ENCODE measurements at regions of chrX and their contacts with region 1.

Region 1: GRCh38 chrX:120250522-120251271 is at the start of gene ZBTB33:
- DNase-seq: peak; percentile 60
- ATAC-seq: peak; percentile 99
- H3K4me3 ChIP-seq: peak within 1 kb of the TSS; percentile 69
- H3K27ac ChIP-seq: peak within 1 kb of the TSS; percentile 68
- H3K4me1 ChIP-seq: no peaks in the 10 kb centered on the region
- H3K27me3 ChIP-seq: no peaks in the 10 kb centered on the region
- CTCF ChIP-seq: peak; percentile 53 to 63 (median 55); a peak in 5 of 6 replicates
- EP300 ChIP-seq: no peak
- POLR2A ChIP-seq: peak; percentile 75
- RAD21 ChIP-seq: peak; percentile 19; the same call in 1 of the 2 replicates
- polyA plus RNA-seq, gene ZBTB33: 5.2 to 5.4 TPM

Region 2: GRCh38 chrX:120262859-120263708 is 12.4 kb after region 1 on chrX:
- CTCF ChIA-PET with region 1: interaction called, 5 read pairs
- POLR2A ChIA-PET with region 1: interaction called, 4 read pairs
- RAD21 ChIA-PET with region 1: interaction called, 4 read pairs
- SMC1A ChIA-PET with region 1: interaction called, 13 read pairs
- in situ Hi-C with region 1: no loop called
- intact Hi-C with region 1: no loop called
- DNase-seq: no peak
- ATAC-seq: peak; percentile 85
- H3K4me3 ChIP-seq: no peak overlapping the region
- H3K27ac ChIP-seq: peak overlapping the region; percentile 32; the same call in 1 of the 2 replicates
- H3K4me1 ChIP-seq: peaks cover 8% of the 10 kb centered on the region
- H3K27me3 ChIP-seq: no peaks in the 10 kb centered on the region
- CTCF ChIP-seq: no peak
- EP300 ChIP-seq: peak; percentile 22 to 35; a peak in 1 of 4 replicates
- POLR2A ChIP-seq: no peak
- RAD21 ChIP-seq: no peak

Region 3: DNA sequence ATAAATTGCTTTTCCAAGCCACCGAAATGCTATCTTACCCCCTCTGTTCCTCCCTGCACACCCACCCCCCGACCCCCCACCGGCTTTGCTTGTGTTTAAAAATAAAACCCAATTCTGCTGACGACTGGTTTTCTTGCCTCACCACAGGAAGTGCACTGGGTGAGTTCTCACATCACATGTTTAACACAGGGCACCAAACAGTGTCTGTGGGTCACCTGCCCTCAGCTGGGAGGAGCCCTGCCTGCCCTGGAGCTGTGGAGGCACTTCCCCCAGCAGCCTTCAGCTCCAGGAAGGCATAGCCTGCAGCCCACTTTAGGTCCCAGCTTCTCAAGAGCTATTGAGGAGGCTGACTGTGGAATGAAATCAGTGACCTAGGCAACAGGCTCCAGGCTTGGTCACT is 51.7 kb after region 1 on chrX:
- CTCF ChIA-PET with region 1: interaction called, 6 read pairs
- POLR2A ChIA-PET with region 1: interaction called, 13 read pairs
- RAD21 ChIA-PET with region 1: interaction called, 29 read pairs
- SMC1A ChIA-PET with region 1: interaction called, 16 read pairs
- in situ Hi-C with region 1: loop called (anchors 5 kb)
- intact Hi-C with region 1: loop called (anchors 1 kb)
- DNase-seq: peak; percentile 61
- ATAC-seq: peak; percentile 96
- H3K4me3 ChIP-seq: peak overlapping the region; percentile 30; the same call in 1 of the 2 replicates
- H3K27ac ChIP-seq: peak overlapping the region; percentile 62
- H3K4me1 ChIP-seq: peaks cover 13% of the 10 kb centered on the region
- H3K27me3 ChIP-seq: no peaks in the 10 kb centered on the region
- CTCF ChIP-seq: no peak
- EP300 ChIP-seq: 0 out of 4 replicates have a peak, but pooled peaks of 1 of the 2 experiments have one; percentile 29
- POLR2A ChIP-seq: 0 out of 2 replicates have a peak, but pooled peaks have one; percentile 32
- RAD21 ChIP-seq: no peak

Region 4: DNA sequence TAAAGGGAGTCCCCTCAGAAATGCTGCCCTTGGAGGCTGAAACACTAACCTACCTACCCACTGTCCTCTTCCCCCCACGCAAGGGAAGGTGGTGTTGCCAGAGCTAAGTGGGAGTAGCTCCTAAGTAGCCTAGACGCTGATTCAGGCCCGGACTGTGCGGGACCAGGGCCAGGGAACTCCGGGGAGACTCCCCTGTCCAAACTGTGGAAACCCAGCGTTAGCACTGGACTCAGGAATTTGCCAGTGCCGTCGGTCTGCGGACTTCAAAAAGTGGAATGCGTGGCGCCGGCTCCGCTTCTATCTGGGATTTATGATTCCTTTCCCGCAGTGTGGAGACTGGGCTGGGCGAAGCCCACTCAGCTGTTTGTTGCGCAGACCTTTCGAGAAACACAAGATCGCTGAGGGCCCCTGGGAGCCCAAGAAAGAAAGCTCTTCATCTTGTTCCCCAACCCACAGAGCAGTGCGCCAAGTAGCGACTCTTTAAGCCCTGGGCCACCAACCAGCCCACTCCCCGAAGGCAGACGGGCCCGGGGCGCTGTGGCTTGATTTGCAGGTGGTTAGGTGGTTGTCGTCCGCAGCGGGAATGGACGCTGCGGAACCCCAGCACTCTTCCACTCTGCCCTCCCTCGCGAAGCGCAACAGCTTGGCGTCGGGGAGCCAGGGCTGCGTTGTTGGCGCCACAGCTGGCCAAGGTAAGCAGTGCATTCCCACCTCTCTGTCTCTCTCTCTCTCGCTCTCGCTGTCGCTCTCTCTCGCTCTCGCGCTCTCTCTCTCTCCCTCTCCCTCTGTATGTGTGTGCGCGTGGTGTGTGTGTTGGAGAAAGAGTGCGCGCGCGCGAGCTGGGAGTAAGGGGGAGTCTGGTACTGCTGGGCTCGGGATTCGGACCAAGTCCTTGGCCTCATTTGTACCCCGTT is 58.5 kb after region 1 on chrX:
- CTCF ChIA-PET with region 1: interaction called, 8 read pairs
- POLR2A ChIA-PET with region 1: interaction called, 7 read pairs
- RAD21 ChIA-PET with region 1: interaction called, 15 read pairs
- SMC1A ChIA-PET with region 1: interaction called, 13 read pairs
- in situ Hi-C with region 1: loop called (anchors 5 kb)
- intact Hi-C with region 1: loop called (anchors 2 kb)
- DNase-seq: peak; percentile 47
- ATAC-seq: peak; percentile 95
- H3K4me3 ChIP-seq: peak overlapping the region; percentile 49
- H3K27ac ChIP-seq: no peak overlapping the region
- H3K4me1 ChIP-seq: no peaks in the 10 kb centered on the region; the same call in 1 of the 2 replicates
- H3K27me3 ChIP-seq: peaks cover 2 to 7% of the 10 kb centered on the region in 2 experiments; a peak in 3 of 4 replicates
- CTCF ChIP-seq: peak; percentile 70 to 72 (median 71)
- EP300 ChIP-seq: no peak
- POLR2A ChIP-seq: peak; percentile 74
- RAD21 ChIP-seq: peak; percentile 46